SK-N-SH (cell line): ENCODE measurements at regions of chr3 and their contacts with region 1.

Region 1: DNA sequence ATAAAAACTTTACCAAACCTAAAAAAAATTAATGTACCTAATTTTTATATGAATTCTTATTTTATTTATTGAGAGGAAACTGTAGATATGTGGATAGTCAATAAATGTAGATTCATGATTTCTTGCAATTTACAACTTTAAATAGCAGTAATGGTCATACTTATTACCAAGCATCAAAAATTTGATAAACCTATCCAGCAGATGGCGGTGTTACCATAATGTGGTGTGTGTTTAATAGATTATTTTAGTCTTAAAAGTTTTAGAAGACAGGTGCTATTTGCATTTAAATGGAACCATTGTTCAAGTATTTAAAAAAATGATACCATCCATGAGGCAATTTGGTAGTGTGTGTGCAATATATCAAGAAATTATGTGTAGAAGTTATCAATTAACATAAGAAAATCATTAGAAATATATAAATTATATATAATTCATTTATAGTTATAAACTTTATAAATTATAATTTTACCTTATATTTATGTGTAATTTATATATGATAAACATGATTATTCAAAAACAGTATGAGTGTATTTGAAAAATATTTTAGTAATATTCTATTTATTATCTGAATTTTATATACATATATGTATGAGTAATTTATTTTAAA is 176.0 kb upstream of the BCHE start:
- DNase-seq: peak; percentile 1
- H3K4me3 ChIP-seq: no peak overlapping the region
- H3K27ac ChIP-seq: no peak overlapping the region
- H3K4me1 ChIP-seq: no peaks in the 10 kb centered on the region
- H3K27me3 ChIP-seq: no peaks in the 10 kb centered on the region
- CTCF ChIP-seq: peak; percentile 71
- EP300 ChIP-seq: no peak
- RAD21 ChIP-seq: peak; percentile 52

Region 2: GRCh38 chr3:167032261-167032876 is 1019.2 kb after region 1 on chr3:
- CTCF ChIA-PET with region 1: interaction called, 19 read pairs
- POLR2A ChIA-PET with region 1: no interaction called
- DNase-seq: peak; percentile 9
- H3K4me3 ChIP-seq: peak overlapping the region in 1 of 2 experiments; percentile 28; a peak in 1 of 4 replicates
- H3K27ac ChIP-seq: no peak overlapping the region
- H3K4me1 ChIP-seq: no peaks in the 10 kb centered on the region
- H3K27me3 ChIP-seq: no peaks in the 10 kb centered on the region
- CTCF ChIP-seq: peak; percentile 74
- EP300 ChIP-seq: no peak
- RAD21 ChIP-seq: peak; percentile 76